Dorsolateral prefrontal cortex (tissue), 120 donors: ENCODE measurements at regions of chr10 and their contacts with region 1.

Region 1: GRCh38 chr10:80382989-80383388 is 25.4 kb upstream of the PRXL2A start:
- DNase-seq: peak in 4 of 10 donors; percentile 7 to 45 (median 38)
- H3K4me3 ChIP-seq: peak overlapping the region in 9 of 59 donors; percentile 15 to 33 (median 23)
- H3K27ac ChIP-seq: no peak overlapping the region
- H3K27me3 ChIP-seq: no peaks in the 10 kb centered on the region
- CTCF ChIP-seq: peak in 55 of 56 donors; percentile 38 to 83 (median 68)

Region 2: GRCh38 chr10:79883986-79884385 is 499.0 kb before region 1 on chr10:
- intact Hi-C with region 1: no loop called
- DNase-seq: no peak
- H3K4me3 ChIP-seq: no peak overlapping the region
- H3K27ac ChIP-seq: no peak overlapping the region
- H3K27me3 ChIP-seq: no peaks in the 10 kb centered on the region
- CTCF ChIP-seq: no peak

Region 3: GRCh38 chr10:80444646-80445319 is 61.8 kb after region 1 on chr10:
- intact Hi-C with region 1: loop called in 1 of 2 experiments (anchors 5 kb)
- DNase-seq: peak; percentile 39 to 80 (median 68)
- H3K4me3 ChIP-seq: no peak overlapping the region
- H3K27ac ChIP-seq: peak overlapping the region in 46 of 59 donors; percentile 2 to 78 (median 58)
- H3K27me3 ChIP-seq: no peaks in the 10 kb centered on the region
- CTCF ChIP-seq: peak; percentile 32 to 96 (median 85)

Region 4: GRCh38 chr10:80504158-80504811 is 121.3 kb after region 1 on chr10:
- intact Hi-C with region 1: loop called (anchors 2 to 5 kb)
- DNase-seq: peak in 1 of 10 donors; percentile 30
- H3K4me3 ChIP-seq: no peak overlapping the region
- H3K27ac ChIP-seq: peak overlapping the region in 51 of 59 donors; percentile 5 to 89 (median 73)
- H3K27me3 ChIP-seq: no peaks in the 10 kb centered on the region
- CTCF ChIP-seq: no peak

Region 5: GRCh38 chr10:80509403-80510161 is 126.6 kb after region 1 on chr10:
- intact Hi-C with region 1: loop called (anchors 2 to 5 kb)
- DNase-seq: peak in 1 of 10 donors; percentile 13
- H3K4me3 ChIP-seq: no peak overlapping the region
- H3K27ac ChIP-seq: peak overlapping the region in 44 of 59 donors; percentile 5 to 89 (median 56)
- H3K27me3 ChIP-seq: no peaks in the 10 kb centered on the region
- CTCF ChIP-seq: no peak

Region 6: GRCh38 chr10:80924063-80924952 is 541.3 kb after region 1 on chr10:
- intact Hi-C with region 1: loop called in 1 of 2 experiments (anchors 5 kb)
- DNase-seq: peak in 4 of 10 donors; percentile 12 to 41 (median 37)
- H3K4me3 ChIP-seq: no peak overlapping the region
- H3K27ac ChIP-seq: no peak overlapping the region
- H3K27me3 ChIP-seq: peaks cover 0 to 3% (median 0%) of the 10 kb centered on the region in 45 donors
- CTCF ChIP-seq: peak; percentile 55 to 84 (median 74)